Dendritic cell treated with granulocyte-macrophage colony-stimulating factor and Interleukin-4, amounts not matched to agents 40 ng/mL and 50 ng/mL, for 4 days (primary cell): ENCODE measurements at regions of chr3 and their contacts with region 1.

Region 1: GRCh38 chr3:133927540-133928066 is 31.9 kb upstream of the RAB6B start:
- H3K4me3 Mint-ChIP-seq: peak overlapping the region; percentile 74
- H3K27ac Mint-ChIP-seq: peak overlapping the region; percentile 42
- H3K4me1 Mint-ChIP-seq: peaks cover 13% of the 10 kb centered on the region
- H3K27me3 Mint-ChIP-seq: peaks cover 37% of the 10 kb centered on the region

Region 2: DNA sequence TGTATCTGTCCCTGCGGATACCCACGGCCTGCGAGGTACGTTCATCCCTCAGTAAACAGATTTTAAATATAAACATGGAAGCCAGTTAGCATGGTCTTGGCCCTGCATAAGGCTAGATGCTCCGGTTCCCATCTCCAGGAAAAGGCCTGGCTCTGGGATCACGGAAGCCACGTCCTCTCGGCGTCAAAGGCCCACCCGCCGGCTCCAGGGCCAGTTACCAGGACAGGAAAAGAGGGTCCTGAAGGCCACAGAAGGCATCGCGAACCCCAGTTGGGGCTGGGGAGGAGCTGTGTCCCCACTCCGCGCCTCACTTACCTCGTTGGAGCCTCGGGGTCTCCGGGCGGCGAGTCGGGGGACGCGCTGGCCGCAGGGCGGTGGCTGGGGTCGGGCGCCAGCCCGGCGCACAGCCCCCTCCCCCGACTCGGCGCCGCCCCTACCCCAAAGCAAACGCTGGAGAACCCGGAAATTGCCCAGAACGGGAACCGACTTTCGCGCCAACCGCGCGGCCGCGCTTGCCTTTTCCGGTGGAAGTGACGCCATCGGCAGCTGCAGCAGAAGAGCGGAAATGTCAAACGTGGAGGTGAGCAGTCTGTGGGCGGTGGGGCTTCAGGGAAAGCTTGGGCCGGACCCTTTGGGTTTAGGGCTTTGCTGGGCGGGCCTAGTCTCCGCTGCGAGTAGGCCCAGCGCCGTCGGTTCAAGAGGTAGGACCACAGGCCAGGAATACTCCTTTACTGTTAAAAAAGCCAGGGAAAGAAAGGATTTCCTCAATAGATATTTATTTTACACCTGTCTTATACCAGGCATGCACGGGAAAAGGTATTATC is 265.9 kb before region 1 on chr3 and contains the start of gene TOPBP1:
- intact Hi-C with region 1: loop called (anchors 5 kb)
- H3K4me3 Mint-ChIP-seq: peak within 1 kb of the TSS; percentile 88
- H3K27ac Mint-ChIP-seq: peak within 1 kb of the TSS; percentile 91
- H3K4me1 Mint-ChIP-seq: peaks cover 31% of the 10 kb centered on the region
- H3K27me3 Mint-ChIP-seq: no peaks in the 10 kb centered on the region

Region 3: DNA sequence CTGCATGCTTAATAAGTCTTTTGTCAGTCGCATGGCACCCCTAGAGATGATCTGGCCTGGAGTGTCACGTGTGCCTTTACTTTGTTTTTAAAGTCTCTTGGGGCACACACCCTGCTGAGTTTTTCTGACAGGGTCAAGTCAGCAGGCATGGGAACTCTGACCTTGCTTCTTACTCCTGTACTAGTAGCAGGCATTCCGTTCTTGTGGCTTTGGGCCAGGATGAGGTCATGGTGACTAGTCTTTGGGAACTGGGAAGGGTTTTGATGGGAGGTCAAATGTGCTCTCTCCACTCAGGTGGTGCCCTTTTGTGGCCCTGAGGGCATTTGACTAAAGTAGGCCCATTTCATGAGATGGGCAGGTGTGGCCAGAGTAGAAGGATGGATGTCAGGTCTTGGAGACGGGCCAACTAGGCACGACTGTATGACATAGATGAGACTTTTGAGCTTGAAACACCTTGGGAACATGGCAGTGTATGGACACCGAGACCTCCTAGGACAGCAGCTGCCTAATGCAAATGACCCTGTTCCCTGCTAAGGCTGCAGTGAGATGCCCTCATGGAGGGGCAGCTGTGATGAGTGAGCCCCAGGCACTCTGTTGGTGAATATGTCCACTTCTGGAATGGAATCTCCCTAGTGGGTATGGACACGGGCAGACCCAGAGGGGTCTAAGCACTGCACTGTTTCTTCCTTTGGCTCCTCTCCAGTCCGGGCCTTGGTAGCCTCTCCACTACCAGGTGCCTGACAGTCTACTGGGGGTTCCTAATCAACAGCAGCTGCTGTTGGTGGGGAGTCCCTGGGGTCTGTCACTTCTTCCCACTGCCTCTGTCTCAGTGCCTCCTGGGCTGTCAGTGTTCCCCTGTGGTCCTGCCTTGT is 105.6 kb before region 1 on chr3:
- intact Hi-C with region 1: loop called (anchors 1 kb)
- H3K4me3 Mint-ChIP-seq: no peak overlapping the region
- H3K27ac Mint-ChIP-seq: no peak overlapping the region
- H3K4me1 Mint-ChIP-seq: no peaks in the 10 kb centered on the region
- H3K27me3 Mint-ChIP-seq: no peaks in the 10 kb centered on the region

Region 4: DNA sequence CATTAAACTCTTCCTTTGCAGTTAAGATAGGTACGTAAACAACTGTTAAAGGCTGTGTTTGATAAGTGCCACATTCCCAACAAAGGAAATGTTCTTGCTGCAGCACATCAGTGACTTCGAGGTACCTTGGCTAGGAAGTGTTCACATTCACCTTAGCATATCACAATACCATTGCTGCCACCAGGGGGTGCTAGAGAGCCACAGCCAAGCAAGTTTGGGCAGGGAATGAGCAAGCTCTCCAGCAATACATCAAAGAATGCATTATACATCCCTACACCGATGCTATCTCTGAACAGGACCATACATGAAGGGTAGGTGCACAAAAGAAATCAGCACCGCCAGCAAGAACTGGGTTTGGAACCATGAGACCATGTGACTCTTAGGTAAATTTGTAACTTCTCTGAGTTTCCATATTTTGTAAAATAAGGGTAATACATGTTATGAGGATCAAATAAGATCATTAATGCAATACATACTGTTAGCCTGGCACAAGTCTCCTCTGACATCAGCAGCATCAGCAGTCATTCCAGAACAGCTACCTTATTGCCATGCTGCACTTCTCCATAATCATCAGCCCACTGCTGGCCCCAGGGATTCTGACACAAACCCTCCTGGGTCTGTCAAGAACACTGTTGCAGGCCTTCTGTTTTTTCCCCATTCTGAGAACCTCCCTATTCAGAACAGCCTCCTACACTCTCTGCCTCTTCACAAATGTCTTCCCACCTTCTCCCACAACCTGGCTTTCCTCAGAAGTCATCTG is 285.5 kb after region 1 on chr3:
- intact Hi-C with region 1: loop called (anchors 5 kb)
- H3K4me3 Mint-ChIP-seq: no peak overlapping the region
- H3K27ac Mint-ChIP-seq: peak overlapping the region; percentile 16
- H3K4me1 Mint-ChIP-seq: peaks cover 19% of the 10 kb centered on the region
- H3K27me3 Mint-ChIP-seq: no peaks in the 10 kb centered on the region